Head of caudate nucleus (tissue), 42 donors: ENCODE measurements at regions of chr4 and their contacts with region 1.

Region 1: GRCh38 chr4:16289897-16290554 is 63.8 kb upstream of the TAPT1 start:
- DNase-seq: peak in 10 of 42 donors; percentile 4 to 69 (median 28)

Region 2: GRCh38 chr4:16082426-16083240 is 207.4 kb before region 1 on chr4:
- intact Hi-C with region 1: no loop called
- DNase-seq: peak in 29 of 42 donors; percentile 13 to 49 (median 27)

Region 3: GRCh38 chr4:16253127-16253960 is 36.7 kb before region 1 on chr4:
- intact Hi-C with region 1: no loop called
- DNase-seq: peak in 1 of 42 donors; percentile 27

Region 4: GRCh38 chr4:16443504-16444088 is 153.6 kb after region 1 on chr4:
- intact Hi-C with region 1: loop called (anchors 10 kb)
- DNase-seq: peak in 6 of 42 donors; percentile 4 to 45 (median 8)

Region 5: DNA sequence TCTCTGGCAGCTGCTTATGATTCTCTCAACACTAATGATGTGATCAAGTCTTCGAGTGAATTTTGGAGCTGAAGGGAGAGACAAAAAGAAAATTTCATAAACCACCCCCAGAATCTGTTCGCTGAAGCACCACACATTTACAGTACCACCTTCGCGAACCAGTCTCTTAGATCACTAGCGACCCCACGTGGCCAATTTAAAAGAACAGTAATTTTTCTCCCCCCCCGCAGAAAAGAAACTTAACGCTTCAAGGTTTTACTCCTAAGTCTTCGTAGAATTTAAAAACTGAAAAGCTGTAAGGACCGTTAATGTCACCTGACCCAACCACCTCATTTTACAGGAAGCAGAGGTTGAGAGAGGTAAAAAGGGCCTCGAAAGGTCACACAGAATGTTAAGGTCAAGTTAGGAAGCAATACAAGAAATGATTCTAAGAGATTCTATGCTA is 1034.4 kb after region 1 on chr4:
- intact Hi-C with region 1: loop called (anchors 10 kb)
- DNase-seq: peak in 38 of 42 donors; percentile 24 to 86 (median 66)